Heart right ventricle (tissue), 16 donors: ENCODE measurements at regions of chr12 and their contacts with region 1.

Region 1: DNA sequence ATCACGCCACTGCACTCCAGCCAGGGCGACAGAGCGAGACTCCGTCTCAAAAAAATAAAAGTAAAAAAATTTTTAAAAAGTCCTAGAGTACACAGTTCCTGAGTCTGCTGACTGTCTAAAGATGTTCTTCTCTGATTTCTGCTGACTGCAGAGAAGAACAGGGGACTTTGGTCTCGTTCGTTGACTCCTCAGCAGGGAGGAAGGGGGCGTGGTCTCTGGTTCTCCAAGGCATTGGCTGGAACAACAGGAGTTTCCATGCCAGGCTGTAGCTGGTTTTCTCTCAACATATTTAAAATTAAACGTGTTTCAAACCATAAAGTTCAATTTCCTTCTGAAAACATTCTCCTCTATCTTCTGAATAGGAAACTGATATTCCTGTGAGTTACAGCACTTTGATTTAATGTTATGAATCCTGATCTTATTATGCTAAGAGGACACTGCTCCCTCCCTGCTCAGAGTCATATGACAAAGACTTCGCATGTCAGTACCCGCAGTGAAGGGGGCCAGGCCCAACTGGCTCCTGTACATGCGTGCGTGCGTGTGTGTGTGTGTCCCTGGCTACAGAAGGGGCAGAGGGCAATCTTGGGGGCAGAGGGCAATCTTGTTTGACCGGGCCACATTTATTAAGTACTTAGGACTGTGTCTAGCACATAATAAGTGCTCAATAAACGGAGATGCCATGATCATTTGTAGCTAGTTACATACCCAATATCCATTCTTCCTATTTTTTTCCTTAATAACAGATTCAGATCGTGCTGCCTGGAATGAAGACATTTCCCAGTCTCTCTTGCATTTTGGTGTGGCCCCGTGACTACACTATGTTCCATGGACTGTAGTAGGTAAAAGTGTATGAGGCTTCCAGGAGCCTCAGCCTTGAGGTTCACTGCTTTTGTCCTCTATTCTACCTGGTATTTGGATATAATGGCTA is 16.5 kb upstream of the HNF1A start:
- DNase-seq: peak; percentile 18 to 29
- ATAC-seq: peak in 3 of 8 donors; percentile 33 to 63 (median 44)
- H3K4me3 ChIP-seq: no peak overlapping the region
- H3K27ac ChIP-seq: peak overlapping the region in 1 of 10 donors; percentile 26
- H3K4me1 ChIP-seq: no peaks in the 10 kb centered on the region
- H3K27me3 ChIP-seq: peaks cover 0 to 5% (median 0%) of the 10 kb centered on the region in 7 donors
- CTCF ChIP-seq: no peak

Region 2: GRCh38 chr12:120725659-120726509 is 236.0 kb before region 1 on chr12 and contains the start of gene ACADS:
- intact Hi-C with region 1: loop called in 1 of 10 experiments (anchors 10 kb)
- DNase-seq: peak; percentile 88 to 94
- ATAC-seq: peak; percentile 98 to 99 (median 99)
- H3K4me3 ChIP-seq: peak within 1 kb of the TSS; percentile 55 to 90 (median 78)
- H3K27ac ChIP-seq: peak within 1 kb of the TSS; percentile 34 to 91 (median 88)
- H3K4me1 ChIP-seq: peaks cover 0 to 30% (median 19%) of the 10 kb centered on the region in 9 donors
- H3K27me3 ChIP-seq: no peaks in the 10 kb centered on the region
- CTCF ChIP-seq: peak in 3 of 9 donors; percentile 14 to 28 (median 25)
- total RNA-seq, gene ACADS: 67.0 to 119 (median 77.9) TPM

Region 3: DNA sequence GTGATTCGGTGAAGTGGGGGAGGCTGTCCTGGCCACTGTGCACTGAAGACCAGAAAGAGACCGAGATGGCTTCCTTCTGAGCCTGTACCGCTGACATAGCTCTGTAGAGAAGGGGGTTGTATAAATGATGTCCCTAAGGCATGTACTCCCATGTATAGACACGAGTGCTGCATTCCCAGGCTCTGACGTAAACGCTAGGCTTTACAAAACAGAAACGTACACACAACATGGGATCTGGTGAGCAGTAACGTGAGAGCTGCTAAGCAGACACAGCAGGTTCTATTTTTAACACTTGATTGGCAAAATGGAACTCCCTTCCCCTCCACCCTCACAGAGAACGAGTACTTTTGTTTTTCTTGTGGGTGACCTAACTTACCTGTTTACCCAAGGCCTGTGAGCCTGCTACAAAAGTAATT is 200.3 kb before region 1 on chr12:
- intact Hi-C with region 1: loop called in 1 of 10 experiments (anchors 10 kb)
- DNase-seq: peak in 1 of 2 donors; percentile 40
- ATAC-seq: peak; percentile 39 to 84 (median 74)
- H3K4me3 ChIP-seq: peak overlapping the region in 1 of 10 donors; percentile 6
- H3K27ac ChIP-seq: peak overlapping the region; percentile 25 to 85 (median 66)
- H3K4me1 ChIP-seq: peaks cover 0 to 19% (median 14%) of the 10 kb centered on the region in 9 donors
- H3K27me3 ChIP-seq: no peaks in the 10 kb centered on the region
- CTCF ChIP-seq: no peak

Region 4: GRCh38 chr12:120866108-120866507 is 95.8 kb before region 1 on chr12:
- intact Hi-C with region 1: loop called in 1 of 10 experiments (anchors 10 kb)
- DNase-seq: no peak
- ATAC-seq: no peak
- H3K4me3 ChIP-seq: no peak overlapping the region
- H3K27ac ChIP-seq: no peak overlapping the region
- H3K4me1 ChIP-seq: peaks cover 0 to 32% (median 24%) of the 10 kb centered on the region in 9 donors
- H3K27me3 ChIP-seq: no peaks in the 10 kb centered on the region
- CTCF ChIP-seq: no peak

Region 5: DNA sequence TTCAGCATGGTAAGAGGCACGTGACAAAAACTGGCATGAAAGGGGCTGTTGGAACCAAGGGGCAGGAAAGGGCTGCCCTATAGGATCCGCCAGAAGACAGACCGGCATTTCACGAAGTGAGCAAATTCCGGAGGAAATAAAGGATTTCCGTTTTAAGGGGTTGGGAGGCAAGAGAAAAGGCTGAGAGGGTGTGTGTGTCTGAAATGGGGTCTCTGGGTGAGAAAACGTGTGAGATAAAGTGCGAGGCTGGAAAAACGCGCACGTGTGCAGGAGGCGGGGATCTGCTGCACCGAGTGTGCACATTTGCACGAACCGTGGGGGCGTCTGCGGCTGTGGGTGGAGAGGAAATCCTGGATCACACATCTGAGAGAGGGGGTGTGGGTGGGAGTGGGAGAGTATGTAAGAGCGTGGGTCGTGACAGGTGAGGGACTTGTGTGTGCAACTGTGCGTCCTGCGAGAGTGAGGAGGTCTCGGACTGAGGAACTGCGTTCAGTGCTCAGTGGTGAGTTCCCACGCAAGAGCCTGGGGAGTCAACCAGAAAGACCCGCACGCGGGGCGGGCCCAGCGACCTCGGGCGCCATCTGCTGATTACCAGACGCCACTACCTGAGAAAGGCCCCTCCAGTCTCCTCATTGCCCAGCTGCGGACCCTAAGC is 133.8 kb after region 1 on chr12:
- intact Hi-C with region 1: no loop called
- DNase-seq: peak; percentile 58 to 75
- ATAC-seq: peak; percentile 85 to 96 (median 92)
- H3K4me3 ChIP-seq: peak overlapping the region in 8 of 10 donors; percentile 21 to 54 (median 42)
- H3K27ac ChIP-seq: peak overlapping the region in 3 of 10 donors; percentile 27 to 44 (median 33)
- H3K4me1 ChIP-seq: peaks cover 0 to 20% (median 10%) of the 10 kb centered on the region in 9 donors
- H3K27me3 ChIP-seq: no peaks in the 10 kb centered on the region
- CTCF ChIP-seq: peak; percentile 69 to 93 (median 88)